ENCODE measurements at regions of chr22 and their contacts with region 1.

Region 1: DNA sequence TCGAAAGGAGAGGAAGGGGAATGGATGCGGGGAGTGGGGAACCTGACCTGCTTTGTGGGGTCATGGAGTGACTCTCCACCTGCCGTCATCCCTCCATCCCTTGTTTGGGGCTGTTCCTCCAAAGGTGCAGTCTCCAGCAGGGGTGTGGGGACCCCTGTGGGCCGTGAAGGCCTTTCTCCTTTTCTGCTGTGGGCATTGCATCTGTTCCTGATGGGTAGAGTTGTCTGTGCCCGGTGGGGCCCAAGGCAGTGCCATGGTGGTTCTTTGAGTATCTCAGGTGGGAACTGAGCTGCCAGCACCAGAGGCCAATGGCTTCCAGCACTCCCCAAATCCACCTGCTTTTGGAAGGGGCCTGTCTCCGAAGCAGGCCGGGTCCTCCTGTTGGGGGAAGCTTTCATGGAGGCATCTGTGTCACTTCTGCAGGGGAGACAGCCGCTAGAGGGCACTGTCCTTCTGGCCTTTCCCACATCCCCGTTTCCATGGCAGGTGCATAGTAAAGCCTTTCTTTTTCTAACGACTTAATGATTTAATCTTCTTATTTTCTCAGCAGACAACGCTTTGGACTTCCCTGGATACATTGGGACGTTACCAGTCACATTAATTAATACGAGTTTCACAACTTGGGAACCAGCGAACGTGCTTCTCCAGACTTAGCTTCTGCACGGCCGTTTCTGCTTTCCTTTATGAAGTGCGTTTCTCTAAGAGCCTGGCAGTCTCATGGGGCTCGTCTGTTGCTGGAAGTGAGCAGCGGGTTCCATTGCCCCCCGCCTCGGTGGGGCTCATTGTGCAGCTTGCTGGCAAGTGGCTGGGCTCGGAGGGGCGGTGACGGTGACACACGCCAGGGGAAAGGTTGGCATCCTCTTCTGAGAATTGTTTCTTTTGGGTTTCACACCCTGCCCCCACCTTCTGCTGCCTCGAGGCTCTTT is 57.1 kb downstream of the PARVB start:
- DNase-seq: peak; percentile 51
- H3K4me3 ChIP-seq: no peak overlapping the region
- H3K27ac ChIP-seq: no peak overlapping the region
- H3K4me1 ChIP-seq: no peaks in the 10 kb centered on the region
- H3K27me3 ChIP-seq: no peaks in the 10 kb centered on the region
- CTCF ChIP-seq: peak; percentile 84 to 90
- POLR2A ChIP-seq: no peak

Region 2: GRCh38 chr22:44003405-44004103 is 77.6 kb before region 1 on chr22:
- CTCF ChIA-PET with region 1: interaction called, 111 read pairs
- POLR2A ChIA-PET with region 1: no interaction called
- dilution Hi-C with region 1: no loop called
- intact Hi-C with region 1: loop called (anchors 1 kb)
- DNase-seq: peak; percentile 60
- H3K4me3 ChIP-seq: no peak overlapping the region
- H3K27ac ChIP-seq: no peak overlapping the region
- H3K4me1 ChIP-seq: peaks cover 14% of the 10 kb centered on the region
- H3K27me3 ChIP-seq: no peaks in the 10 kb centered on the region
- CTCF ChIP-seq: peak; percentile 37 to 64
- POLR2A ChIP-seq: no peak

Region 3: DNA sequence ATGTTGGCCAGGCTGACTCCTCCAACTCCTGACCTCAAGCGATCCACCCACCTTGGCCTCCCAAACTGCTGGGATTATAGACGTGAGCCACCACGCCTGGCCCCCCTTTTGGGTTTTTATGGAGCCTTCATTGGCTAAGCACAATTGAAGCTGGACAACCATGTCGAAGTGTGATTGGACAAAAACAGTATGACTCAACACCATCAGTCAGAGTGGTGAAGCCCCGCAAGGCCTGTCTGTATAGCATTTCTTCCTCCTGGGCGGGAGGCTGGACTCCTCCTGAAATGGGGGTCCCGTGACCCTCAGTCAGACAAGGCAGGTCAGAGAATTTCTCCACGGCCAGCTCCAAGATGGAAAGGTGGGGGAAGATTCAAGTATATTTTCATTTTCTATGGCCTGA is 60.2 kb before region 1 on chr22:
- CTCF ChIA-PET with region 1: interaction called, 24 read pairs
- POLR2A ChIA-PET with region 1: no interaction called
- dilution Hi-C with region 1: no loop called
- intact Hi-C with region 1: loop called (anchors 1 kb)
- DNase-seq: peak; percentile 54
- H3K4me3 ChIP-seq: no peak overlapping the region
- H3K27ac ChIP-seq: peak overlapping the region; percentile 96
- H3K4me1 ChIP-seq: peaks cover 42% of the 10 kb centered on the region
- H3K27me3 ChIP-seq: no peaks in the 10 kb centered on the region
- CTCF ChIP-seq: no peak
- POLR2A ChIP-seq: no peak

Region 4: GRCh38 chr22:44068422-44069191 is 12.6 kb before region 1 on chr22:
- CTCF ChIA-PET with region 1: interaction called, 34 read pairs
- POLR2A ChIA-PET with region 1: no interaction called
- dilution Hi-C with region 1: no loop called
- intact Hi-C with region 1: no loop called
- DNase-seq: no peak
- H3K4me3 ChIP-seq: no peak overlapping the region
- H3K27ac ChIP-seq: no peak overlapping the region
- H3K4me1 ChIP-seq: peaks cover 18% of the 10 kb centered on the region
- H3K27me3 ChIP-seq: no peaks in the 10 kb centered on the region
- CTCF ChIP-seq: no peak
- POLR2A ChIP-seq: no peak

Region 5: GRCh38 chr22:44211946-44212930 is 131.0 kb after region 1 on chr22:
- CTCF ChIA-PET with region 1: no interaction called
- POLR2A ChIA-PET with region 1: no interaction called
- dilution Hi-C with region 1: no loop called
- intact Hi-C with region 1: no loop called
- DNase-seq: no peak
- H3K4me3 ChIP-seq: no peak overlapping the region
- H3K27ac ChIP-seq: no peak overlapping the region
- H3K4me1 ChIP-seq: no peaks in the 10 kb centered on the region
- H3K27me3 ChIP-seq: no peaks in the 10 kb centered on the region
- CTCF ChIP-seq: no peak
- POLR2A ChIP-seq: no peak

Region 6: GRCh38 chr22:44625981-44626687 is 544.9 kb after region 1 on chr22:
- CTCF ChIA-PET with region 1: interaction called, 29 read pairs
- POLR2A ChIA-PET with region 1: no interaction called
- dilution Hi-C with region 1: no loop called
- intact Hi-C with region 1: loop called (anchors 1 kb)
- DNase-seq: peak; percentile 62
- H3K4me3 ChIP-seq: no peak overlapping the region
- H3K27ac ChIP-seq: no peak overlapping the region
- H3K4me1 ChIP-seq: no peaks in the 10 kb centered on the region
- H3K27me3 ChIP-seq: no peaks in the 10 kb centered on the region
- CTCF ChIP-seq: peak; percentile 85 to 88
- POLR2A ChIP-seq: no peak